K562 (cell line): ENCODE measurements at regions of chr1 and their contacts with region 1.

Region 1: DNA sequence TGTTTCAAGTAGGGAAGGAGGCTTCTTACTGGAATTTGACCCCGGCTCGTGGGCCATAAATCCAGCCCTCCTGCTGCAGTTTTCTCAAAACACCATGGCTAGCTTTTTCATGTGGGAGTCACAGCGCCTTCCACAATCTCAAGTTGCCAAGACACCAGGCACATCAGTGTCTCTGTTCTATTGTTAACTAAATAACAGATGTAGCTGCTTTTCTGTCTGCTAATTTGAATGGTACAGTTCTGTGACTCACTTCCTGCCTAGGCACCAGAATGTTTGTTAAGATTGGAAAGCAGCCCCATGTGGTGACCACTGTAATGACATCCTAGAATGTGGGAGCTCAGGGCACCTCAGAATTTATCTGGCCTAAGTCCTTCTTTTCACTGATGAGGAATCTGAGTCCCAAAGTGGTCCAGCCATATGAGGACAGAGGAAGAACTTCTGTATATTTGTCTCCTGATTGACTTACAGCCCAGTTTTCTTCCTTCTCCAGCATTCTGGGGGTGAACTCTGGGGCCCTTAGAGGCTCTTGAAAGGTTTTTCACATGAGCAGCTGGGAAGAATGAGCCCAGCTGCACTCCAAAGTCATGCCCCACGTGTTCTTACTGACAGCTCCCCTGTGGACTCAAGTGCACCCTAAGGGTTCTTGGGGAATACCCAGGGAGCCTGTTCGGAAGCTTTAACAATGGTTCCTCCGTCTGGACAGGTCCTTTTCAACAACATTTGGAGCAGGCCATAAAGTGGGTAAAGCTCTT is 27.5 kb downstream of the TRIM45 start:
- DNase-seq: peak; percentile 59 to 74 (median 64)
- ATAC-seq: peak; percentile 87
- H3K4me3 ChIP-seq: no peak overlapping the region
- H3K27ac ChIP-seq: peak overlapping the region; percentile 83
- H3K4me1 ChIP-seq: peaks cover 4 to 21% of the 10 kb centered on the region in 2 experiments; a peak in 4 of 5 replicates
- H3K27me3 ChIP-seq: no peaks in the 10 kb centered on the region
- CTCF ChIP-seq: peak; percentile 46 to 56 (median 51)
- EP300 ChIP-seq: 0 out of 2 replicates have a peak, but pooled peaks have one; percentile 20
- POLR2A ChIP-seq: no peak
- RAD21 ChIP-seq: peak in 1 of 2 experiments; percentile 32; a peak in 2 of 4 replicates

Region 2: GRCh38 chr1:117104986-117105385 is 10.9 kb after region 1 on chr1:
- CTCF ChIA-PET with region 1: no interaction called
- POLR2A ChIA-PET with region 1: interaction called, 16 read pairs
- in situ Hi-C with region 1: no loop called
- intact Hi-C with region 1: no loop called
- DNase-seq: no peak
- ATAC-seq: no peak
- H3K4me3 ChIP-seq: no peak overlapping the region
- H3K27ac ChIP-seq: no peak overlapping the region
- H3K4me1 ChIP-seq: no peaks in the 10 kb centered on the region
- H3K27me3 ChIP-seq: no peaks in the 10 kb centered on the region
- CTCF ChIP-seq: no peak
- EP300 ChIP-seq: no peak
- POLR2A ChIP-seq: no peak
- RAD21 ChIP-seq: no peak

Region 3: DNA sequence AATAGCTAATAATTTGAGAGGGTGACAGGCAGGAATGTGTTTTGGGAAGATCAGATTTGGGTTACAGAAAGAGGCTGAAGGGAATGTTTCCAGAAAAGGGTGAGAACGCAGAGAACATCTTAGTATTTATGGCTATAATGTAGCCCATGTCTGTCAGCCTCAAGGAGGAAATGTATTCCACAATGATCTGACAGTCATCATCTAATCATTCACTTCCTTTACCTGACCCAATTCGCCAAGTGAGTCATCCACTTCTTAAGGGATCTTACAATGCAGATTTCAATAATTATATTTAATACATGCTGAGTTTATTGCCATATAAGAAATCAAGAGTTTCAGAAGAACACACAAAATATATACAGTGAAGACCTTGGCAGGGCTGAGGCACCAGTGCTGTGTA is 16.7 kb after region 1 on chr1:
- CTCF ChIA-PET with region 1: no interaction called
- POLR2A ChIA-PET with region 1: interaction called, 12 read pairs
- in situ Hi-C with region 1: no loop called
- intact Hi-C with region 1: no loop called
- DNase-seq: no peak
- ATAC-seq: no peak
- H3K4me3 ChIP-seq: no peak overlapping the region
- H3K27ac ChIP-seq: no peak overlapping the region
- H3K4me1 ChIP-seq: peaks cover 0 to 4% of the 10 kb centered on the region in 2 experiments; a peak in 2 of 5 replicates
- H3K27me3 ChIP-seq: no peaks in the 10 kb centered on the region
- CTCF ChIP-seq: no peak
- EP300 ChIP-seq: no peak
- POLR2A ChIP-seq: no peak
- RAD21 ChIP-seq: no peak

Region 4: GRCh38 chr1:117359561-117360289 is 265.7 kb after region 1 on chr1:
- CTCF ChIA-PET with region 1: no interaction called
- POLR2A ChIA-PET with region 1: no interaction called
- in situ Hi-C with region 1: no loop called
- intact Hi-C with region 1: no loop called
- DNase-seq: no peak
- ATAC-seq: no peak
- H3K4me3 ChIP-seq: no peak overlapping the region
- H3K27ac ChIP-seq: no peak overlapping the region
- H3K4me1 ChIP-seq: peaks cover 4 to 11% of the 10 kb centered on the region in 2 experiments; a peak in 4 of 5 replicates
- H3K27me3 ChIP-seq: no peaks in the 10 kb centered on the region
- CTCF ChIP-seq: no peak
- EP300 ChIP-seq: no peak
- POLR2A ChIP-seq: no peak
- RAD21 ChIP-seq: no peak